Left cardiac atrium (tissue), 4 donors: ENCODE measurements at regions of chr14 and their contacts with region 1.

Region 1: GRCh38 chr14:59333668-59334067 is 131.5 kb downstream of the GPR135 start:
- DNase-seq: no peak
- ATAC-seq: peak; percentile 92

Region 2: DNA sequence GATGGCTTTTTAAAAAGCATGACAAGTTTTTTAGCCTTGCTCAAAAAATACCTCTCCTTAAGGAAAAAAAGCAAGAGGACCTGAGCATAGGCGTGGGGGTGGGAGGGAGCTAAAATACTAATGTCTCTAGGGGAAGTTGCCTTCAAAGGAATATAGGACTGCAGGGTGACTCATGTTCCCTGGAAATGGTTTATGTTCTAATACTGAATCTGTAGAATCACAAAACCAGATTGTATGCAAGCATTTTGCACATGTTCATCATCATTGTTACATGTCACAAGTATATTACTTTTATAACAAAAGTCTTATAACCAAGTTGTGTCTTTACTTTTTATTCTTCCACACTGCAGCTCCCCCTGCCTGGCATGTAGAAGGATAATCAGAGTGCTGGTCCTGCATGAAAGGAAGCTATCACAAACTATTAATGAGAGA is 94.9 kb after region 1 on chr14:
- intact Hi-C with region 1: loop called in 1 of 2 experiments (anchors 10 kb)
- DNase-seq: no peak
- ATAC-seq: peak in 1 of 2 donors; percentile 21

Region 3: GRCh38 chr14:59507063-59507780 is 173.6 kb after region 1 on chr14:
- intact Hi-C with region 1: no loop called
- DNase-seq: peak; percentile 37
- ATAC-seq: peak; percentile 61 to 77